ENCODE measurements at regions of chr2 and their contacts with region 1.

Region 1: GRCh38 chr2:17976871-17977746 is 98.6 kb downstream of the KCNS3 start:
- DNase-seq: peak; percentile 38 to 78
- ATAC-seq: peak; percentile 95 to 97 (median 96)
- H3K4me3 ChIP-seq: peak overlapping the region; percentile 49
- H3K27ac ChIP-seq: peak overlapping the region; percentile 85
- H3K4me1 ChIP-seq: peaks cover 20% of the 10 kb centered on the region
- H3K27me3 ChIP-seq: no peaks in the 10 kb centered on the region
- CTCF ChIP-seq: no peak

Region 2: DNA sequence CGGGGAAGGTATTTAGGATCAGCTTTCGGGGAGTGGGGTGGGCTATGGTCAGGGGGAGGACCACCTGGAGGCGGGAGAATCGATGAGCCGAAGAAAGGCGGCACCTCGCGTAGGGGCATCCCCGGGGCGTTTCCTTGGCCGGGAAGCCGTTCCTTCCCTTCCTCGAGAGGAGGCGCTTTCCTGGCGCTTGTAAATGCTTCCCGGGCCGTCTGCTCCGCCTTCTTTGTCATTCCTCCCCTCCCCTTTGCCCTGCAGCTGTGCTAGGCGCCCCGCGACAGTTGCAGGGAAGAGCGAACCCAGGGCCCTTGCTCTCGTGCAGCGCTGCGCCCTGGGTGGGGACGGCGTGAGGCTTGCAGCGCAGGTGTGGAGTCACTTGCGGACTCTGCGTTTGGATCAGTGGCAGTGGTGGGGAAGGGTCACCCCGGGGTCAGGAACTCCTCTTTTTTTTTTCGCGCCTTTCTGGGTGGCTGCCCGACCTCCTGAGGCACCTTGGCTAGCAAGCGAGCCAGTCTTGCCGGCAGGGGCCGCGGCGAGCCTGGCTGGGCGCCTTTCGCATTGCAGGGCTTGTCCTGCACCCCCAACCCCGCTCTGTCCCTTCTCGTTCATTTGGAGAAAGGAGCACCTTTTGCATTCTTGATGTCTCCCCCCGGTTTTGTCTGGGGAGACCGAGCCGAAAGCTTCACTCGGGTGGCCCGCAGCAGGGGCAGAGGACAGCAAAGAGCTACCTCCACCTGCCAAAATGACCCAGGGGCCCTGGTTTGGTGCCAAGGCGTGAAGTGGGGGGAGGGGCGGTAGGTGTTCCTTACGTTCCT is 97.8 kb before region 1 on chr2:
- intact Hi-C with region 1: loop called (anchors 5 to 10 kb)
- DNase-seq: peak; percentile 70 to 89
- ATAC-seq: peak; percentile 75 to 90 (median 82)
- H3K4me3 ChIP-seq: peak overlapping the region; percentile 91
- H3K27ac ChIP-seq: peak overlapping the region; percentile 80
- H3K4me1 ChIP-seq: peaks cover 17% of the 10 kb centered on the region
- H3K27me3 ChIP-seq: no peaks in the 10 kb centered on the region
- CTCF ChIP-seq: peak; percentile 19

Region 3: DNA sequence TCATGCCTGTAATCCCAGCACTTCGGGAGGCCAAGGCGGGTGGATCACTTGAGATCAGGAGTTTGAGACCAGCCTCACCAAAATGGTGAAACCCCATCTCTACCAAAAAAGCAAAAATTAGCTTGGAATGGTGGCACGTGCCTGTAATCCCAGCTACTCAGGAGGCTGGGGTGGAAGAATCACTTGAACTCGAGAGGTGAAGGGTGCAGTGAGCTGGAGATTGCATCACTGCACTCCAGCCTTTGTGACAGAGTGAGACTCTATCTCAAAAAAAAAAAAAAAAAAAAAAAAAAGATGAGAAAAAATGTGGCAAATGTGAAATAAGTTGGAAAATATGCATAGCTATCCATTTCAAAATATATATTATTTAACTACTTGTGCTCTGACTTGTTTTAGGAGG is 33.7 kb before region 1 on chr2:
- intact Hi-C with region 1: no loop called
- DNase-seq: no peak
- ATAC-seq: no peak
- H3K4me3 ChIP-seq: no peak overlapping the region
- H3K27ac ChIP-seq: no peak overlapping the region
- H3K4me1 ChIP-seq: no peaks in the 10 kb centered on the region
- H3K27me3 ChIP-seq: no peaks in the 10 kb centered on the region
- CTCF ChIP-seq: no peak

Region 4: GRCh38 chr2:18047850-18048249 is 70.7 kb after region 1 on chr2:
- intact Hi-C with region 1: loop called in 1 of 2 experiments (anchors 5 kb)
- DNase-seq: peak; percentile 27 to 76
- ATAC-seq: peak; percentile 83 to 95 (median 88)
- H3K4me3 ChIP-seq: peak overlapping the region; percentile 10
- H3K27ac ChIP-seq: peak overlapping the region; percentile 51
- H3K4me1 ChIP-seq: peaks cover 15% of the 10 kb centered on the region
- H3K27me3 ChIP-seq: no peaks in the 10 kb centered on the region
- CTCF ChIP-seq: no peak

Region 5: DNA sequence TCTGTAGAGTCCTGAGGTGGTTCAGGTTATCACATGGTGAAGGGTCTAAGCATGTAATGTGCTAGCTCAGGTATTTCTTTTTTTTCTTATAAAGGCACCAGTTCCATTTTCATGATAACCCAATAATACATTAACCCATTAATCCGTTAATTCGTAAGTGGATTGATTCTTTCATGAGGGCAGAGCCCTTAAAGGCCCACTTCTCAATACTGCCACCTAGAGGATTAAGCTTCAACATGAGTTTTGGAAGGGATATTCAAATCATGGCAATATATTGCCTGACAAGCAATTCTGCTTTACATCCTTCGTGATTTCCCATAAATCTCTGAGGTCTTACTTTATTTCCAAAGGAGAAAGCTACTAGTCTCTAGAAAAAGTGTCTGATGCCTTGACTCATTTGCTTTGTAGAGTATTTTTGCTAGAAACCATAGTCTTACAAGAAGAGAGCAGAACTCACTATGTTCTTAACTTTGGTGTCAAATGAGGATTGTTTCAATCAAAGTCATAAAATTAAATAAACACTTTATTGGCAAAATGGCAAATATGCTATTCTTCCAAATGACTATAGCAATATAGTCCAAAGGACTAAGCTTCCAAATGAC is 172.6 kb after region 1 on chr2:
- intact Hi-C with region 1: loop called in 1 of 2 experiments (anchors 10 kb)
- DNase-seq: no peak
- ATAC-seq: peak in 2 of 4 donors; percentile 52 to 78
- H3K4me3 ChIP-seq: no peak overlapping the region
- H3K27ac ChIP-seq: no peak overlapping the region
- H3K4me1 ChIP-seq: peaks cover 11% of the 10 kb centered on the region
- H3K27me3 ChIP-seq: no peaks in the 10 kb centered on the region
- CTCF ChIP-seq: peak; percentile 79